ENCODE measurements at regions of chr1 and their contacts with region 1.

Region 1: DNA sequence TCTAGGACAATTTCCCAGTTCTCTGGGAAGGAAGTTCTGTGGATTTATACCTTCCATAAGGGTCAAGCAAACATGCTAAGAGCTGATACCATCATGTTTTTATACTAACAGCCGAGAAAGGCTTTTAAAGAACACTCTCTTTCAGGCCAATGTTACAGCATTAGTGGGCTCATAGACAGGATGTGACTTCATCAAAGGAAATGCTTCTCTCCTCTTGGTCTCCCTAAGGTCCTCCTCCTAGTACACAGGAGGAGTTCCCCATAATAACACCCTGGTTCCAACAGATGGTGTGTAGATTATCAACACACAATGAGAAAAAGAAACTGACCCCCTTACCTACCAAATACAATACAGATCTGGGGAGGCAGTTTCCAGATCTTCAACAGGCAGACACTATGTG is 26.7 kb upstream of the GLIS1 start:
- DNase-seq: no peak
- H3K4me3 ChIP-seq: no peak overlapping the region
- H3K27ac ChIP-seq: no peak overlapping the region
- H3K4me1 ChIP-seq: no peaks in the 10 kb centered on the region; a peak in 1 of 7 replicates
- H3K27me3 ChIP-seq: no peaks in the 10 kb centered on the region
- CTCF ChIP-seq: no peak
- EP300 ChIP-seq: no peak
- POLR2A ChIP-seq: no peak
- RAD21 ChIP-seq: no peak

Region 2: GRCh38 chr1:53754484-53755312 is 11.0 kb before region 1 on chr1:
- CTCF ChIA-PET with region 1: interaction called, 28 read pairs
- POLR2A ChIA-PET with region 1: no interaction called
- DNase-seq: no peak
- H3K4me3 ChIP-seq: no peak overlapping the region
- H3K27ac ChIP-seq: no peak overlapping the region
- H3K4me1 ChIP-seq: no peaks in the 10 kb centered on the region
- H3K27me3 ChIP-seq: no peaks in the 10 kb centered on the region
- CTCF ChIP-seq: peak; percentile 26 to 82 (median 69)
- EP300 ChIP-seq: no peak
- POLR2A ChIP-seq: no peak
- RAD21 ChIP-seq: peak; percentile 76 to 77